Aorta (tissue), 5 donors: ENCODE measurements at regions of chr5 and their contacts with region 1.

Region 1: DNA sequence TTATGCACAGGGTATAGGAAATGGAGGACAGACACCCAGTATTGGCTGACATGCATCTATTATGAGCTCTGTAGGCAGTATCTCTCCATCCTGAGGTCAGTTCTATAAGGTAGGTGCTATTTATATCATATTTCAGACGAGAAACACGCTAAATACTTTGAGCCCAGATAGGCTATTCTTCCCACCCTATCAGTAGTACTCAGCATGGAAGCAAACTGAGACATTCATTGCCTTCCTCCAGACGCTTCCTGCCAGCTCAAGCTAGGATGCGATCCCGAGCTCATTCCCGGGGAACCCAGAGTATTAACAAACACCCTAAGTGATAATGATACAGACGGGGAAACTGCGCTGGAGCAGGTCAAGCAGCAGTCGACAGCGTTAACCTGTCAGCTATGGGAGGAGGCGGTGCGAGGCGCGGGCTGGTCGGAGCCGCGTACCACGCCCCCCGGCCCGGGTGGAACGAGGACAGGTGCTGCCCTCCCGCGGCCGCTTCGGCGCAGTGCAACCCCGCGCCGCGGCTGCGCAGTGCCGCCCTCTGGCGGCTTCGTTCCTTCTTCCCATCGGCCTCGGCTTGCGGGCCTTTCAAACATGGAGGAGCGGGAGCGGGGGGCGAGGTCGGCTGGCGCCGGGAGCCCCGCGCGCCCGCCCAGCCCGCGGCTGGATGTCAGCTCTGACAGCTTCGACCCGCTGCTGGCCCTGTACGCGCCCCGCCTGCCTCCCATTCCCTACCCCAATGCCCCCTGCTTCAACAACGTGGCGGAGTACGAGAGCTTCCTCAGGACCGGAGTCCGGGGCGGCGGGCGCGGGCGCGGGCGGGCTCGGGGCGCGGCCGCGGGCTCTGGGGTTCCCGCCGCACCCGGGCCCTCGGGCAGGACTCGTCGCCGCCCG is at the start of gene LSM11:
- DNase-seq: peak; percentile 91 to 97
- ATAC-seq: peak; percentile 98
- H3K4me3 ChIP-seq: peak within 1 kb of the TSS; percentile 83 to 95
- H3K27ac ChIP-seq: no peak within 1 kb of the TSS
- H3K4me1 ChIP-seq: peaks cover 0 to 1% of the 10 kb centered on the region in 2 donors
- H3K27me3 ChIP-seq: no peaks in the 10 kb centered on the region
- total RNA-seq, gene LSM11: 5.2 to 5.9 TPM

Region 2: DNA sequence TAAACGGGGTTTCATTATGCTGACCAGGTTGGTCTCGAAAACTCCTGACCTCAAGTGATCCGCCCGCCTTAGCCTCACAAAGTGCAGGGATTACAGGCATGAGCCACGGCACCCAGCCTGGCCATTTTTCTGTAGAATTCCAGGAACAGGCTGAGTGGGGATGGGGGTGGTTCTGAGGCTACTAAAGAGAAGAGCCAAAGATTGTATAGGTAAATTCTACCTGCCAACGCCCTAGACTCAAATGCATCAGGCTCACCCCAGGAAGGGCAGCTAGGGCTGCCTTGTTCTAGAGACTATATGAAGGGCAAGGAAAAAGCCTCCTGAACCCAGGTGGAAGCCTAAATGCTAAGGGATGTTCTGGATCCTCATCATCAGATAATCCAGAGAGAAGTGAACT is 73.7 kb before region 1 on chr5:
- intact Hi-C with region 1: loop called in 1 of 2 experiments (anchors 2 kb)
- DNase-seq: no peak
- ATAC-seq: no peak
- H3K4me3 ChIP-seq: no peak overlapping the region
- H3K27ac ChIP-seq: no peak overlapping the region
- H3K4me1 ChIP-seq: no peaks in the 10 kb centered on the region
- H3K27me3 ChIP-seq: no peaks in the 10 kb centered on the region